MCF 10A (cell line): ENCODE measurements at regions of chr12 and their contacts with region 1.

Region 1: GRCh38 chr12:47767216-47767724 is 5.8 kb upstream of the SLC48A1 start:
- DNase-seq: peak; percentile 82
- H3K4me3 Mint-ChIP-seq: no peak overlapping the region
- H3K27ac Mint-ChIP-seq: peak overlapping the region; percentile 57
- H3K4me1 Mint-ChIP-seq: peaks cover 23% of the 10 kb centered on the region
- H3K27me3 Mint-ChIP-seq: no peaks in the 10 kb centered on the region
- CTCF ChIP-seq: peak; percentile 47

Region 2: DNA sequence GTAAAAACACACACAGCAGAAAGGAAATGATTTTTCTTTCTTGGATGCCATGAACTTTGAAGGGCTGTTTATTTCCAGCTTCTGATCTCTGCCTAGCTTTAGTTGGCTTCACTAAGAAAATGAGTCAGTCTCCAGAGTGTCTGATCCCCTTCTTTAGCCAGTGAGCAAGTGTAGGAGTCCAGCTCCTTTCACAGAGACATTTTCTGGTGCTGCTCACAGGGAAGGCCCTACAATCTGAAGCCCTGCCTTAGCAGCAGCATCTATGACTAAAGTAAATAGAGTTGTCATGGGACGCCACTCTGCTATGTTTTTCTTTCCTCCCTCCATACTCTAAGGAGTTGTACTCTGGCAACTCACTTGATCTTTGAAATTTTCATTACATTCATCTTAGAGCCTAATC is 164.9 kb before region 1 on chr12:
- CTCF ChIA-PET with region 1: no interaction called
- POLR2A ChIA-PET with region 1: no interaction called
- intact Hi-C with region 1: no loop called
- DNase-seq: no peak
- H3K4me3 Mint-ChIP-seq: no peak overlapping the region
- H3K27ac Mint-ChIP-seq: no peak overlapping the region
- H3K4me1 Mint-ChIP-seq: peaks cover 9% of the 10 kb centered on the region
- H3K27me3 Mint-ChIP-seq: no peaks in the 10 kb centered on the region
- CTCF ChIP-seq: no peak

Region 3: GRCh38 chr12:47715393-47715876 is 51.8 kb before region 1 on chr12:
- CTCF ChIA-PET with region 1: interaction called, 34 read pairs
- POLR2A ChIA-PET with region 1: no interaction called
- intact Hi-C with region 1: loop called (anchors 1 kb)
- DNase-seq: peak; percentile 97
- H3K4me3 Mint-ChIP-seq: peak overlapping the region; percentile 63
- H3K27ac Mint-ChIP-seq: no peak overlapping the region
- H3K4me1 Mint-ChIP-seq: peaks cover 15% of the 10 kb centered on the region
- H3K27me3 Mint-ChIP-seq: no peaks in the 10 kb centered on the region
- CTCF ChIP-seq: peak; percentile 85

Region 4: DNA sequence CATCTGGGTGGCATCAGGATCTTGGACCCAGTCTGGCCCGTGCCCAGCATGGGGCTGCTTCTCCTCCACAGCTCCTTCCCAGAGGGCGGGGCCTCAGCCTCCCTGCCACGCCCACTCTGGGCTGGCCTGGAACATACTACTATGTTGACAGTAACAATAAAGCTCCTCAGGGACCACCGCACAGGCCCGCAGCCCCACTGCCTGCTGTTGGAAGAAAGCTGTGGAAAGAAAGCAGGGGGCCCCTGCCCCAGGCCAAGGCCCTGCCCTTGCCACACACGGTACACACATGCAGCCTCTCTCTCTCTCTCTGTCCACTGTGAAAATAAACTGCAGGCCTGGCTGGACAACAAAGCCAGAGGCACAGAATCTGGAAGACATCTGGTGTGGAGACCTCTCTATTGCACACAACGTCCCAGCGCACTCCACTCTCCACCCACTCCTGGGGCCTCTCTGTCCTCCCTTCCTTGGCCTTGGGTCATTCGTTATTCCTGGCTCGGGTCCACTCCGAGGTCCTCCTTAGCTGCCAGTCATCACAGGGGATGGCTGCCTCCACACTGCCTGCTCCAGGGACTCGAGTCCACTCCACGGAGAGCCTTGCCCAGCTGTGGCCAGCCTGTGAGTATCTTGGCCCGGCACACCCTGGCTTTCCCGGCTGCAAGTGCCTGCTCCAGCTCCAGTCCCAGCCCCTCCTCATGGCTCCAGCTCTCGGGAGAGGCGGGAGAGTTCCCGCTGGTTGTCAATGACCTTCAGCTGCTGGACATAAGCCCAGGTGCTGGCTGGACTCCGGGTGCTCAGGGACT is 30.2 kb before region 1 on chr12:
- CTCF ChIA-PET with region 1: interaction called, 843 read pairs
- POLR2A ChIA-PET with region 1: interaction called, 38 read pairs
- intact Hi-C with region 1: loop called (anchors 1 kb)
- DNase-seq: peak; percentile 59
- H3K4me3 Mint-ChIP-seq: no peak overlapping the region
- H3K27ac Mint-ChIP-seq: no peak overlapping the region
- H3K4me1 Mint-ChIP-seq: peaks cover 14% of the 10 kb centered on the region
- H3K27me3 Mint-ChIP-seq: no peaks in the 10 kb centered on the region
- CTCF ChIP-seq: no peak

Region 5: GRCh38 chr12:47753034-47754001 is 14.0 kb before region 1 on chr12:
- CTCF ChIA-PET with region 1: interaction called, 184 read pairs
- POLR2A ChIA-PET with region 1: interaction called, 22 read pairs
- intact Hi-C with region 1: no loop called
- DNase-seq: peak; percentile 76
- H3K4me3 Mint-ChIP-seq: peak overlapping the region; percentile 35
- H3K27ac Mint-ChIP-seq: peak overlapping the region; percentile 89
- H3K4me1 Mint-ChIP-seq: peaks cover 32% of the 10 kb centered on the region
- H3K27me3 Mint-ChIP-seq: no peaks in the 10 kb centered on the region
- CTCF ChIP-seq: no peak

Region 6: DNA sequence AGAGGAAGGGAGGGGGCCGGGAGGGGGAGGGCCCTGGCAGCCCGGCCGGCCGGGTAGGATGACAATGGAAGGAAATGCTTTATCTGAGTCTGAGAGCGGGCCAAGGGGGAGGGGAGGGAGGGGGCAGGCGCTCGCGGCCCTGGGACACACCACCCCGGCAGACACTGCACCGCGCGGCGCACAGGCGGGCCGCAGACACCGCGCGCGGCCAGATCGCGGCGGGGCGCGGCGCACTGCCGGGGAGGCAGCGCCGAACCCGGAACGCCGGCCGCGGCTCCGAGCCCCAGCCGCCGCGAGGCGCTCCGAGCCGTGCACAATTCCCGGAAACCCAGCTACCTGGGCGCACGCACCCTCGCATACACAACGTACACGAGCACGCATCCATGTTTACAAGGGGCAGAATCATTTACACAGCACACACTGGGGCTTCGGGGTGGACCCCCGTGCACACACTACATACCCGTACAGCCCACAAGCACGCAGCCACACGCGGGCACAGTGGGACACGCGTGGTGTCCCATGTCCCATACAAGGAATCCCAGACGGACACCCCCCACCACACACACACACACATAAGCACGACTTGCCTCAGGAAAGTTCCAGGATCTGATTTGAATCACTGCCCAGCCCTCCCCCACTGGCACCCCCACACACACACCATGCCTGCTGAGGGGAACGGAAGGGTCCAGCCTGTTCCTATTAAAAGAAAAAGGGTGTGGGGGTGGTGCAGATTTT is 52.8 kb after region 1 on chr12 and contains the start of gene HDAC7:
- CTCF ChIA-PET with region 1: interaction called, 622 read pairs
- POLR2A ChIA-PET with region 1: interaction called, 10 read pairs
- intact Hi-C with region 1: no loop called
- DNase-seq: peak; percentile 81
- H3K4me3 Mint-ChIP-seq: peak within 1 kb of the TSS; percentile 98
- H3K27ac Mint-ChIP-seq: peak within 1 kb of the TSS; percentile 93
- H3K4me1 Mint-ChIP-seq: peaks cover 73% of the 10 kb centered on the region
- H3K27me3 Mint-ChIP-seq: no peaks in the 10 kb centered on the region
- CTCF ChIP-seq: no peak
- total RNA-seq, gene HDAC7: 65.0 and 80.1 TPM in 2 replicates